ENCODE measurements at regions of chr12 and their contacts with region 1.

Region 1: DNA sequence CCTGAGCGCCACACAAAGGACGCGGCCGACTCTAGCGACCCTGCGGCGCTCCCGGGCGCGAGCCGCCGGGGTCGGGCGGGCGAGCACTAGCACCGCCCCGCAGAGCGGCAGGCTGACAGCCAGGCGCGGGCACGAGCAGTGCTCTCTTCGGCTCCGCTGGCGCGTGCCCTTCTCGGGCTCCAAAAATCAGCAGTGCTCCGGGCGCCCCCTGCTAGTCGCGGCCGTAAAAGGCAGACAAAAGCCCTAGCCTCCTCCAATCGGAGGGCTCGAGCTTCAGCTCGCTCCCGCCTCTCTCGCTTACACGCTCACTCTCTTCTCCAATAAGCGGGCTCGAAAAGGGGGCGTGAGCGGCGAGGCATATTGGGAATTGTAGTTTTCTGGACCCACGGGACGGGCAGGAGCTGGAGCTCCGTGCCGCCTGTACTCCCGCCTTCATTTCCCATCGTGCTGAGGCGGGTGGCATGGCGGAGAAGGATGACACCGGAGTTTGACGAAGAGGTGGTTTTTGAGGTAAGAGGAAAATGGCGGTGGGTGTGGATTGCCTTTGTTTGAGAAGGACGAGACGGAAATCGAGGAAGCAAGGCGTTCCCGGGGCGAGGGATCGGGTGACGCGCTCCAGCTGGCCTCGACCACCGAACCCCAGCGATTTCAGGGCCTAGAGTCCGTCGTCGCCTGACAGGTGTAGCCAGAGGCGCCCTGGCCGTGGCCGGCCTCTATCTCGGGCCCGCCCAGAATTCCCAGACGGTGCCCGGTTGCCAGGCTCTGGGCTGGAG is at the starts of genes FGD6 and VEZT:
- DNase-seq: peak; percentile 98 to 100 (median 99)
- H3K4me3 ChIP-seq: peak within 1 kb of the TSS; percentile 14 to 88 (median 80)
- H3K27ac ChIP-seq: peak within 1 kb of the TSS; percentile 86 to 98 (median 93)
- H3K4me1 ChIP-seq: peaks cover 5 to 55% of the 10 kb centered on the region in 2 donors
- H3K27me3 ChIP-seq: no peaks in the 10 kb centered on the region
- CTCF ChIP-seq: peak; percentile 38 to 73 (median 61)
- POLR2A ChIP-seq: peak; percentile 77 to 94
- total RNA-seq, gene FGD6: 10.1 to 33.9 (median 21.5) TPM
- total RNA-seq, gene VEZT: 50.9 to 189 (median 91.5) TPM

Region 2: GRCh38 chr12:95117178-95117599 is 100.4 kb before region 1 on chr12:
- intact Hi-C with region 1: loop called (anchors 2 to 10 kb)
- DNase-seq: peak; percentile 69 to 89 (median 76)
- H3K4me3 ChIP-seq: no peak overlapping the region
- H3K27ac ChIP-seq: no peak overlapping the region
- H3K4me1 ChIP-seq: peaks cover 0 to 7% of the 10 kb centered on the region in 2 donors
- H3K27me3 ChIP-seq: no peaks in the 10 kb centered on the region
- CTCF ChIP-seq: peak; percentile 63 to 91 (median 80)
- POLR2A ChIP-seq: no peak

Region 3: GRCh38 chr12:95124106-95124505 is 93.5 kb before region 1 on chr12:
- intact Hi-C with region 1: loop called in 1 of 2 experiments (anchors 10 kb)
- DNase-seq: no peak
- H3K4me3 ChIP-seq: no peak overlapping the region
- H3K27ac ChIP-seq: no peak overlapping the region
- H3K4me1 ChIP-seq: no peaks in the 10 kb centered on the region
- H3K27me3 ChIP-seq: no peaks in the 10 kb centered on the region
- CTCF ChIP-seq: no peak
- POLR2A ChIP-seq: no peak

Region 4: GRCh38 chr12:95169368-95169767 is 48.2 kb before region 1 on chr12:
- intact Hi-C with region 1: loop called in 1 of 2 experiments (anchors 10 kb)
- DNase-seq: peak in 5 of 7 donors; percentile 49 to 69 (median 58)
- H3K4me3 ChIP-seq: no peak overlapping the region
- H3K27ac ChIP-seq: peak overlapping the region in 2 of 5 donors; percentile 7 to 38
- H3K4me1 ChIP-seq: peaks cover 16 to 38% of the 10 kb centered on the region in 2 donors
- H3K27me3 ChIP-seq: no peaks in the 10 kb centered on the region
- CTCF ChIP-seq: no peak
- POLR2A ChIP-seq: no peak

Region 5: GRCh38 chr12:95336390-95337067 is 119.0 kb after region 1 on chr12:
- intact Hi-C with region 1: loop called in 1 of 2 experiments (anchors 10 kb)
- DNase-seq: peak; percentile 75 to 94 (median 85)
- H3K4me3 ChIP-seq: no peak overlapping the region
- H3K27ac ChIP-seq: peak overlapping the region in 2 of 5 donors; percentile 7 to 22
- H3K4me1 ChIP-seq: peaks cover 0 to 7% of the 10 kb centered on the region in 2 donors
- H3K27me3 ChIP-seq: no peaks in the 10 kb centered on the region
- CTCF ChIP-seq: peak; percentile 66 to 97 (median 86)
- POLR2A ChIP-seq: no peak